Endothelial cell of umbilical vein (primary cell): ENCODE measurements at regions of chr9 and their contacts with region 1.

Region 1: DNA sequence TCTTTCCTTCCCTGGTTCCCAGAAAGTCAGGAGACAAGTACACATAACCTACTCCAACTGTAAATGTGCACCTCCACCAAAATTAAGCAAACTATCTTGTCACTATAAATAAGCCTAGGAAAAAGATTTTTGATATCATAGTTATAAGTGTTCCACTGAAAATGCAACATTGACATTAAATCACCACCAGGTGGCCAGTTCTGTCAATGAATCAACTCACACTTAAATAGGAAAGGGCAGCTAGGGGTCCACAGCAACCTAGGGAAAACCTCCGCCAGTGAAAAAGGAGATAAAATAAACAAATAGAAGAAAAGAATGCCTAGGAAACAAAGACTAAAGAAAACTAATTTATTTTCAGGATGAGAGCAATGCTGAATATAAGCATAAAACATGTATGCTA is 243.1 kb upstream of the PTPRD start:
- DNase-seq: peak; percentile 51
- H3K4me3 ChIP-seq: no peak overlapping the region
- H3K27ac ChIP-seq: no peak overlapping the region
- H3K4me1 ChIP-seq: peaks cover 3% of the 10 kb centered on the region
- H3K27me3 ChIP-seq: no peaks in the 10 kb centered on the region
- CTCF ChIP-seq: peak; percentile 31 to 51
- POLR2A ChIP-seq: no peak

Region 2: GRCh38 chr9:10867194-10867593 is 11.3 kb after region 1 on chr9:
- CTCF ChIA-PET with region 1: interaction called, 11 read pairs
- POLR2A ChIA-PET with region 1: no interaction called
- dilution Hi-C with region 1: no loop called
- intact Hi-C with region 1: no loop called
- DNase-seq: no peak
- H3K4me3 ChIP-seq: no peak overlapping the region
- H3K27ac ChIP-seq: no peak overlapping the region
- H3K4me1 ChIP-seq: no peaks in the 10 kb centered on the region
- H3K27me3 ChIP-seq: no peaks in the 10 kb centered on the region
- CTCF ChIP-seq: no peak
- POLR2A ChIP-seq: no peak

Region 3: DNA sequence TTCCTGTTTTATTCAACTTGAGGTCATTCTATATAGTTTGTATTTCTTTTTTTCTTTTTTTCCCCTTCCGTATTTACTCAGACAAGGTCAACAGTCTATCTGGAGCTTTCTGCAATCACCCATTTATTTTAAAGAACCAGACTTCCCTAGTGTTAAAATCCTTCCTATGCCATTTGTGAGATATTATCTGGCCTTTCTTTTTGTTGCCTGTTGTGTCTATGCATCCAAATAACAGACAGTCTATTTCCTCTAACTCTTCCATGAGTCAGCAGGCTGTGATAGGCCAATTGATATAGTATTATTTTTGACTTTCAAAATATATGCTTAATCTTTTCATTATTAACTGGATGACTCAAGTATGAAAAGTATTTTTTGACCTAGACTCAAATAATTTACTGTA is 48.1 kb after region 1 on chr9:
- CTCF ChIA-PET with region 1: no interaction called
- POLR2A ChIA-PET with region 1: no interaction called
- dilution Hi-C with region 1: no loop called
- intact Hi-C with region 1: loop called (anchors 2 kb)
- DNase-seq: peak; percentile 86
- H3K4me3 ChIP-seq: no peak overlapping the region
- H3K27ac ChIP-seq: peak overlapping the region; percentile 34
- H3K4me1 ChIP-seq: peaks cover 17% of the 10 kb centered on the region
- H3K27me3 ChIP-seq: no peaks in the 10 kb centered on the region
- CTCF ChIP-seq: no peak
- POLR2A ChIP-seq: no peak

Region 4: DNA sequence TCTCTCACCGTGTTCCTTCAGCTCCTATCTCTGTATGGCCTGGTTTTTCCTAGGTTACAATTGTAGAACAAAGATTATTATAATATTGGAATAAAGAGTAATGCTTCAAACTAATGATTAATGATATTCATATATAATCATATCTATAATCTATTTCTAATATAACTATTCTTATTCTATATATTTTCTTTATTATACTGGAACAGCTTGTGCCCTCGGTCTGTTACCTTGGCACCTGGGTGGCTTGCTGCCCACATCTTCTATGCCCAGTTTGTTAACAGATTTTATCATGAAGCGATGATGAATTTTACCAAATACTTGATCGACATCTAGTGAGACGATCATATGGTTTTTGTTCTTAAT is 1473.8 kb after region 1 on chr9:
- CTCF ChIA-PET with region 1: interaction called, 40 read pairs
- POLR2A ChIA-PET with region 1: no interaction called
- dilution Hi-C with region 1: no loop called
- intact Hi-C with region 1: loop called (anchors 1 kb)
- DNase-seq: no peak
- H3K4me3 ChIP-seq: no peak overlapping the region
- H3K27ac ChIP-seq: no peak overlapping the region
- H3K4me1 ChIP-seq: no peaks in the 10 kb centered on the region
- H3K27me3 ChIP-seq: no peaks in the 10 kb centered on the region
- CTCF ChIP-seq: no peak
- POLR2A ChIP-seq: no peak

Region 5: GRCh38 chr9:12464910-12465512 is 1609.2 kb after region 1 on chr9:
- CTCF ChIA-PET with region 1: interaction called, 6 read pairs
- POLR2A ChIA-PET with region 1: no interaction called
- dilution Hi-C with region 1: no loop called
- intact Hi-C with region 1: loop called (anchors 2 kb)
- DNase-seq: peak; percentile 42
- H3K4me3 ChIP-seq: no peak overlapping the region
- H3K27ac ChIP-seq: no peak overlapping the region
- H3K4me1 ChIP-seq: no peaks in the 10 kb centered on the region
- H3K27me3 ChIP-seq: peaks cover 0 to 3% of the 10 kb centered on the region in 2 experiments
- CTCF ChIP-seq: peak; percentile 33 to 41
- POLR2A ChIP-seq: no peak